Activated CD4-positive, alpha-beta memory T cell treated with anti-CD3 and anti-CD28 coated beads, Interleukin-2, amount 10 ng/mL, durations not matched to agents 7 days and 5 days (primary cell): ENCODE measurements at regions of chr17 and their contacts with region 1.

Region 1: DNA sequence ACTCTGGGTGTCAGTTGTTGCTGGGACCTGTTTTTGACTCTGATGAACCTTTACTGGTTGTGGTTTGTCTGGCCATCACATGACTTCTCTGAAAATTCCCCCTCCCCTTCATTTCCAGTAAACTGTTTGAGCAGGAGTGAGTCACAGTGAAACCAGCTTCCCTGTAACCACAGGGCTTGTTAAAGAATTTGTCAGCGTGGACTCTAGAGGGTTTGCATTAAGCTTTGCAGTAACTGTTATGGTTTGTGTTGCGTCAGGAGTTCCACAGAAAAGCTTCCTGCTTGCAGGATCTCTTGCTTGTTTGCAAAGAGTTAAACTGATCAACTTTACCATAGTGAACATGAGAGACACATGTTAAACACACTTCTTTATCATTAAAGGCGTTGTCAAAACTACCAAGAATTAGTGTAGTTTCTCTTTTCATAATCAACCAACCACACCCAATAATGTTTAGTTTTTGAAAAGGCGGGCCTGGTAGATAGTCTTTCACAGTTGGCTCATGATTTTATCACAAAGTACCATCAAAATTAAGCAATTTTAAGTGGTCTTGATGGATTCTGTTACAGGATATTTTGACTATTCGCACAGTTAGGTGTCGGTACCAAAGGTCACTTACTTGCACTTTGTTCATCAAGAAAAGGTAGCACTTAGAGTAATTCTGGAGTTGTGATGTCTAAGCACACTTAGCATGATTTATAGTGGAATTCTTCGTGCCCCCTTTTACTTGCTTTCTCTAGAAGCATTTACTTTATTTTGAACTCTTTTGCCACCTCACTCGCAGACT is 79.3 kb downstream of the VMP1 start:
- DNase-seq: peak; percentile 89
- H3K4me3 Mint-ChIP-seq: peak overlapping the region; percentile 79
- H3K27ac Mint-ChIP-seq: peak overlapping the region; percentile 97
- H3K4me1 Mint-ChIP-seq: peaks cover 63% of the 10 kb centered on the region
- H3K27me3 Mint-ChIP-seq: no peaks in the 10 kb centered on the region

Region 2: GRCh38 chr17:59601130-59601529 is 185.6 kb before region 1 on chr17:
- CTCF ChIA-PET with region 1: no interaction called
- POLR2A ChIA-PET with region 1: no interaction called
- DNase-seq: peak; percentile 20
- H3K4me3 Mint-ChIP-seq: no peak overlapping the region
- H3K27ac Mint-ChIP-seq: no peak overlapping the region
- H3K4me1 Mint-ChIP-seq: peaks cover 15% of the 10 kb centered on the region
- H3K27me3 Mint-ChIP-seq: no peaks in the 10 kb centered on the region

Region 3: GRCh38 chr17:59680314-59680713 is 106.4 kb before region 1 on chr17:
- CTCF ChIA-PET with region 1: no interaction called
- POLR2A ChIA-PET with region 1: no interaction called
- DNase-seq: no peak
- H3K4me3 Mint-ChIP-seq: no peak overlapping the region
- H3K27ac Mint-ChIP-seq: no peak overlapping the region
- H3K4me1 Mint-ChIP-seq: no peaks in the 10 kb centered on the region
- H3K27me3 Mint-ChIP-seq: no peaks in the 10 kb centered on the region

Region 4: GRCh38 chr17:59734226-59734625 is 52.5 kb before region 1 on chr17:
- CTCF ChIA-PET with region 1: no interaction called
- POLR2A ChIA-PET with region 1: no interaction called
- DNase-seq: no peak
- H3K4me3 Mint-ChIP-seq: no peak overlapping the region
- H3K27ac Mint-ChIP-seq: no peak overlapping the region
- H3K4me1 Mint-ChIP-seq: peaks cover 10% of the 10 kb centered on the region
- H3K27me3 Mint-ChIP-seq: no peaks in the 10 kb centered on the region

Region 5: GRCh38 chr17:59753522-59754467 is 32.9 kb before region 1 on chr17:
- CTCF ChIA-PET with region 1: interaction called, 88 read pairs
- POLR2A ChIA-PET with region 1: interaction called, 279 read pairs
- DNase-seq: no peak
- H3K4me3 Mint-ChIP-seq: peak overlapping the region; percentile 35
- H3K27ac Mint-ChIP-seq: peak overlapping the region; percentile 81
- H3K4me1 Mint-ChIP-seq: peaks cover 71% of the 10 kb centered on the region
- H3K27me3 Mint-ChIP-seq: no peaks in the 10 kb centered on the region

Region 6: DNA sequence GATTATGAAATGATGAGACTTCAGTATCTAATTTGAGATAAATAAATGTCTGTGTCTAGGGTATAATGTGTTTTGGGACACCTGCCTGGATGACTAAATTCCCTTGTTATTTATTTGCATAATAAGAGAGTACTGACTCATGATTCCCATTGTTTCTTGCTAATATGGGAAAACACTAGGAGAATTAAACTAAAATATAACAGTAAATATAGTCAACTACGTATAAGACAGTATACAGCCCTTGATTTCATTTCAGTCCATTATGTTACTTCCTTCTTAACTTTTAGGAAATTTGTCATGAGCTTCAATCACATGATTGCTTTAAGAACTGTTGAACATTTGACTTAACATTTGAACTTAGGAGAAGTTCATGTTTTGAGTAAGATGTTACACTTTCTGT is 16.8 kb before region 1 on chr17:
- CTCF ChIA-PET with region 1: interaction called, 8 read pairs
- POLR2A ChIA-PET with region 1: interaction called, 188 read pairs
- DNase-seq: no peak
- H3K4me3 Mint-ChIP-seq: no peak overlapping the region
- H3K27ac Mint-ChIP-seq: no peak overlapping the region
- H3K4me1 Mint-ChIP-seq: peaks cover 20% of the 10 kb centered on the region
- H3K27me3 Mint-ChIP-seq: no peaks in the 10 kb centered on the region

Region 7: DNA sequence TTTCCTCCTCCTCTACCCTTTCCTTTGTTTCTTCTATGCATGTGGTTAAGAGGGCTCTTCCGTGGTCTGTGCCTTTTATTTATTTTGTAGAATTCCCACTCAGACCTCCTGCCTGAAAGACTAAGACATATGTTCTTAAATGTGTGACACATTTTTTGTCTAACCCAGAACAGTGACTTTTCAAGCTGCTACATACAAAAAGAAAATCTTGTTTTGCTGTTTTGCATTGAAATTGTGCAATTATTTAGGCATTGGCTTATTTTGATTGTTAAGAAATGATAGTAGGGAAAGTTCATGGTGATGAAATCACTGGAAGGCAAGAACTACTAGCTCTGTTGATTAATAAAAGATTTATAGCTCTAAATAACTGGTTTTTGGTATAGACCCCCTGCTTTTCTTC is 29.2 kb after region 1 on chr17:
- CTCF ChIA-PET with region 1: no interaction called
- POLR2A ChIA-PET with region 1: interaction called, 2,499 read pairs
- DNase-seq: no peak
- H3K4me3 Mint-ChIP-seq: no peak overlapping the region
- H3K27ac Mint-ChIP-seq: no peak overlapping the region
- H3K4me1 Mint-ChIP-seq: peaks cover 28% of the 10 kb centered on the region
- H3K27me3 Mint-ChIP-seq: no peaks in the 10 kb centered on the region

Region 8: DNA sequence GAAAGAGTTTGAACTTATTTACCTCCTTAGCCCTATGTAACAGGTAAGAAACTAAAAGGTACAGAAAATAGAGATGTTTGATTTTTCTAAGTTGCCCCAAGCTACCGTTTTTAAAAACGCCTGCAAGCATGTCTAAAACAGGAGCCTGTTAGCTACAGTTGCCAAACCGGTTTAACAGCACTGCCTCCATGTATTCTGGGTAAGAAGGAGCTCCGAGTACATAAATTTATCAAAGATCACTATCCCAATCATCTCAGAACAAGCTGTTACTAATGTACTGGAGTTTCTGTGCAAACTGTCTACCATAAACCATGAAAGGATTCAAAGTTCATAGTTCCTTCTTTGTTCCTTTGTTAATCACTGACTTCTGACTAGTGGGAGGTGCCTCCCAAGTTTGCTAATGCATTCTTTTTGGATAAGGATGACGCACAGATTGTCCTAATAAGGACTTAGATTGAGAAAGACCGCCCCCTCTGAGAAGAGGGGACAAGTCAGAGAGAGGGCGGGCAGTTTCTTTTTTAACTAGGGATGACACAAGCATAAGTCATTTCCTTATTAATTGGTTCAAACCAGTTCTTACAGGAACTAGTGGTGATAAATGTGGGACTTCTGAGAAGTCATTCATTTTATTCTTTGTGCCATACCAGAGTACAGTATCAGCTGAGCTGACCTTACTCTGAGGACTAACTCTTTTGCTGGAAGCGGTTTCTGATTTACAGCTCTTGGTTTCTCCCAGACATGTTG is 50.8 kb after region 1 on chr17:
- CTCF ChIA-PET with region 1: interaction called, 55 read pairs
- POLR2A ChIA-PET with region 1: interaction called, 2,499 read pairs
- DNase-seq: peak; percentile 77
- H3K4me3 Mint-ChIP-seq: peak overlapping the region; percentile 100
- H3K27ac Mint-ChIP-seq: peak overlapping the region; percentile 99
- H3K4me1 Mint-ChIP-seq: peaks cover 37% of the 10 kb centered on the region
- H3K27me3 Mint-ChIP-seq: no peaks in the 10 kb centered on the region

Region 9: DNA sequence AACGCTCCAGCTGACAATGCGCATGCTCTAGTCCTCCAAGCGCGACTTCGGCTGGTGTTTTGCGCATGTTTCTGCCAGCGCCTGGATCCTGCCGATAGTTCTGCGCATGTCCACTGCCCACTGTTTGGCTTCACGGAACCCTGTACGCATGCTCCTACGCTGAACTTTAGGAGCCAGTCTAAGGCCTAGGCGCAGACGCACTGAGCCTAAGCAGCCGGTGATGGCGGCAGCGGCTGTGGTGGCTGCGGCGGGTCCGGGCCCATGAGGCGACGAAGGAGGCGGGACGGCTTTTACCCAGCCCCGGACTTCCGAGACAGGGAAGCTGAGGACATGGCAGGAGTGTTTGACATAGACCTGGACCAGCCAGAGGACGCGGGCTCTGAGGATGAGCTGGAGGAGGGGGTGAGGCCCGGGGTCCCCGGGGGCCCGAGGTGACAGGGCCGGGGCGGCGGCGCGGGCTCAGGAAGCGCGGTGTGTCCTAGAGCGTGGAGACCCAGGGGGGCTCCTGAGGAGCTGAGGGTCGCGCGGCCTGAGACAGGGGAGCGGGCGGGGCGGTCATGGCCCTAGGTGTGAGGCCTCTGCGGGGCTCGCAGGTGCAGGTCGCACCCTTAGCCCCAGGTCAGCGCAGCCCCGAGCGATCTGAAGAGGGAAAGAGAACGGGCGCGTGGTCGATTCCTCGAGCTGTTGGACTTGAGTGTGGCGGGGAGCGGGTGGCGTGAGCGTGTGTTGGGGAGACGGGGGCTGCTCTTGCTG is 106.4 kb after region 1 on chr17 and contains the starts of genes RPS6KB1 and TUBD1:
- CTCF ChIA-PET with region 1: no interaction called
- POLR2A ChIA-PET with region 1: interaction called, 18 read pairs
- DNase-seq: peak; percentile 98
- H3K4me3 Mint-ChIP-seq: peak within 1 kb of the TSS; percentile 100
- H3K27ac Mint-ChIP-seq: peak within 1 kb of the TSS; percentile 96
- H3K4me1 Mint-ChIP-seq: peaks cover 56% of the 10 kb centered on the region
- H3K27me3 Mint-ChIP-seq: no peaks in the 10 kb centered on the region
- total RNA-seq, gene RPS6KB1: 44.3 to 50.1 TPM
- total RNA-seq, gene TUBD1: 11.4 to 11.7 TPM